ENCODE measurements at regions of chr9 and their contacts with region 1.

Region 1: DNA sequence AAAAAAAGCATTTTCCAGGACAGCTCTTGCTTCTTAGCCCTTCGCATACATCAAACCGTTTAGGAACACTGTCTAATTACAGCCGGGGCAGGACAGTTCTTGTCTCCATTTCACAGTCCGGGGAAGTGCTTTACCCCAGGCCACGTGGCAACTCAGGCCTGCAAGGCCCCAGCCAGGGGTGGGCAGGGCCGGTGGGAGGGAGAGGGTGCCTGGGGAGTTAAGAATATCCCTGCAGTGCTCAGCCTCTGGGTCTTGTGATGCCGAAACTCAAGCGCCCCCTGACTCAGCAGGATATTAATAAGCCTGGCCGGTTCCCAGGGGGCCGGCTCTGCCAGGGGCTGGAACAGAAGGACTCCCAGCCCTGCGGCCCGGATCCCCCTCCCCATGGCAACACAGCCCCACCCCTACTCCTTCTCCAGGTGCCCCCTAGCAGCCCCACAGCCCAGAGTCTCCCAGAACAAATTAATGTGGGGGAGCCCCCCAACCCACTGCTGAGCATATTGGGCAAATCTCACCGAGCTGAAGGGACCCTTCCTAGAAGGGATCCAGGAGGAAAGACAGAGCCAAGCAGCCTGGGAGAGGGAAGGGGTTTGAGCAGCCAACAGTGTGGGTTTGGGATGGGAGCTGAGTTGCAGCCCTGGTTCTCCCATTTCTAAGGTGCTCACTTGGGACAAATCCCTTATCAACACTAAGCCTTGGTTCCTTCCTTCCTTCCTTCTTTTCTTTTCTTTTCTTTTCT is 45.3 kb downstream of the PLPP7 start:
- DNase-seq: no peak
- H3K27ac ChIP-seq: no peak overlapping the region
- CTCF ChIP-seq: no peak

Region 2: GRCh38 chr9:131046581-131047202 is 288.1 kb before region 1 on chr9:
- CTCF ChIA-PET with region 1: interaction called, 10 read pairs
- POLR2A ChIA-PET with region 1: no interaction called
- DNase-seq: peak; percentile 83
- H3K27ac ChIP-seq: no peak overlapping the region
- CTCF ChIP-seq: peak; percentile 99

Region 3: DNA sequence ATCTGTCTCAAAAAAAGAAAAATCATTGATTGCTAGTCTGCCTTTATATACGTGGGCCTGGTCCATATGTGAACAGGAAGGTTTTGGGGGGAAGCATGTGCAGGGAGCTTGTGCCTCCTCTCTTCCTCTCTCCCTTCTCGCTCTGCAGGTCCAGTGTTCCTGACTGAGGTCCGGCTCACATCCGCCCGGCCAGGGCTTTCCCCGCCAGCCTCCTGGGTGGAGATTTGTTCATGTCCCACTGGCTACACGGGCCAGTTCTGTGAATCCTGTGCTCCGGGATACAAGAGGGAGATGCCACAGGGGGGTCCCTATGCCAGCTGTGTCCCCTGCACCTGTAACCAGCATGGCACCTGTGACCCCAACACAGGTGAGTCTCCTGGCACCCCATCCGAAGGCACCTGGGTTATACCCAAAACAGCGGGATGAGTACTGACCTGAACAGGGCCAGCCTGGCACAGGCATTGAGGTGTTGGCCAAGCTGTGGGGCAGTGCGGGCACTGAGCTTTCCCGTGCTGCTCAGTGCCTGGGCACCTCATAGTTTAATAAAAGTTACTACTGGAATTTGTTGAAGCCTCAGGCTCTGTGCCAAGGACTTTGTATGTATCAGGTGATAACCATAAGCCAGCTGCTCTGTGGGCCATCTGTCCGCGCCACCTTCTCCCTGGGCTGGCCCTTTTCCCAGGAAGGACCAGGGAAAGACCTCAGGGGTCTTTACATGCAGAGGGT is 277.9 kb before region 1 on chr9:
- CTCF ChIA-PET with region 1: interaction called, 22 read pairs
- POLR2A ChIA-PET with region 1: interaction called, 7 read pairs
- DNase-seq: no peak
- H3K27ac ChIP-seq: no peak overlapping the region
- CTCF ChIP-seq: no peak

Region 4: GRCh38 chr9:131167146-131167692 is 167.6 kb before region 1 on chr9:
- CTCF ChIA-PET with region 1: interaction called, 14 read pairs
- POLR2A ChIA-PET with region 1: no interaction called
- DNase-seq: no peak
- H3K27ac ChIP-seq: no peak overlapping the region
- CTCF ChIP-seq: no peak

Region 5: GRCh38 chr9:131178382-131178781 is 156.4 kb before region 1 on chr9:
- CTCF ChIA-PET with region 1: interaction called, 50 read pairs
- POLR2A ChIA-PET with region 1: no interaction called
- DNase-seq: peak; percentile 87
- H3K27ac ChIP-seq: no peak overlapping the region
- CTCF ChIP-seq: peak; percentile 95

Region 6: GRCh38 chr9:131214286-131214856 is 120.4 kb before region 1 on chr9:
- CTCF ChIA-PET with region 1: interaction called, 11 read pairs
- POLR2A ChIA-PET with region 1: no interaction called
- DNase-seq: no peak
- H3K27ac ChIP-seq: no peak overlapping the region
- CTCF ChIP-seq: no peak

Region 7: GRCh38 chr9:131349881-131350563 is 15.2 kb after region 1 on chr9:
- CTCF ChIA-PET with region 1: interaction called, 32 read pairs
- POLR2A ChIA-PET with region 1: no interaction called
- DNase-seq: peak; percentile 90
- H3K27ac ChIP-seq: no peak overlapping the region
- CTCF ChIP-seq: peak; percentile 99

Measured in RWPE1 (cell line).